PC-3 (cell line): ENCODE measurements at regions of chr7 and their contacts with region 1.

Region 1: GRCh38 chr7:21617916-21618390 is 75.1 kb downstream of the DNAH11 start:
- DNase-seq: peak; percentile 88
- ATAC-seq: peak; percentile 84
- H3K4me3 ChIP-seq: no peak overlapping the region
- H3K27ac ChIP-seq: peak overlapping the region; percentile 51
- H3K4me1 ChIP-seq: peaks cover 22% of the 10 kb centered on the region
- H3K27me3 ChIP-seq: no peaks in the 10 kb centered on the region
- CTCF ChIP-seq: no peak

Region 2: GRCh38 chr7:21580073-21580521 is 37.9 kb before region 1 on chr7:
- CTCF ChIA-PET with region 1: no interaction called
- POLR2A ChIA-PET with region 1: no interaction called
- intact Hi-C with region 1: loop called (anchors 1 kb)
- DNase-seq: peak; percentile 65
- ATAC-seq: peak; percentile 91
- H3K4me3 ChIP-seq: no peak overlapping the region
- H3K27ac ChIP-seq: peak overlapping the region; percentile 7; the same call in 1 of the 2 replicates
- H3K4me1 ChIP-seq: peaks cover 11% of the 10 kb centered on the region; the same call in 1 of the 2 replicates
- H3K27me3 ChIP-seq: peaks cover 3% of the 10 kb centered on the region; the same call in 1 of the 2 replicates
- CTCF ChIP-seq: no peak